CD8-positive, alpha-beta T cell (primary cell): ENCODE measurements at regions of chr3 and their contacts with region 1.

Region 1: DNA sequence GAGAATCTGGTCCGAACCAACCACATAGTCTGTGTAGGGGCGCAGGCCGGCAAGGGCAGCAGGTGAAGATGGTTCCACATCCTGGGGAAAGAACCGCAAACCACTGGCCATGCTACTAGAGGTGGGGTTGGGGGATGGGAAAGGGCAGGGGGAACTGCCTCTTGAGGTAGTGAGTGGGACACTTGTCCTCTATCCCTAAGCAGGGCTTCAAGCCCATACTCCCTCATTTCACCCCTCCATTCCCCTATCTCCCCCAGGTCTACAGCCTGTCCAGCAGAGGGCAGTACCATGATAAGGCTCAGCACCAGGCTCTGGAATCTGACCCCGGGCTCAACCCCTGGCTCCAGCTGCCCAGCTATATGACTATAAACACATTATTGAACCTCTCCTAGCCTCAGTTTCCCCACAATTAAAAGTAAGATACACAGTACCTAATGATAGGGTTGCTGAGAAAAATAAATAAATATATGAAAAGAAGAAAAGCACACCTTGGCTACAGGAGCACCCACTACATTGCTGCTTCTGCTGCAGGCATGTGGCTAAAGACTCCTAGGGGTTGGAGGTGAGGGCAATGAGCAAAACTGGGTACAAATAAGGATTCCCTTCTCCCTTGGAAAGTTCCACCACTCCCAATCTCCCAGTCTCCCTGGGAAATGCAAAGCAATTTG is 6.3 kb downstream of the GORASP1 start:
- DNase-seq: peak in 8 of 9 experiments; percentile 31 to 76 (median 58)
- ATAC-seq: peak; percentile 74
- H3K4me3 ChIP-seq: no peak overlapping the region
- H3K4me3 Mint-ChIP-seq: no peak overlapping the region
- H3K27ac ChIP-seq: no peak overlapping the region
- H3K27ac Mint-ChIP-seq: peak overlapping the region; percentile 55
- H3K4me1 ChIP-seq: peaks cover 8% of the 10 kb centered on the region
- H3K4me1 Mint-ChIP-seq: peaks cover 34% of the 10 kb centered on the region
- H3K27me3 ChIP-seq: no peaks in the 10 kb centered on the region
- H3K27me3 Mint-ChIP-seq: no peaks in the 10 kb centered on the region
- CTCF ChIP-seq: peak; percentile 66

Region 2: DNA sequence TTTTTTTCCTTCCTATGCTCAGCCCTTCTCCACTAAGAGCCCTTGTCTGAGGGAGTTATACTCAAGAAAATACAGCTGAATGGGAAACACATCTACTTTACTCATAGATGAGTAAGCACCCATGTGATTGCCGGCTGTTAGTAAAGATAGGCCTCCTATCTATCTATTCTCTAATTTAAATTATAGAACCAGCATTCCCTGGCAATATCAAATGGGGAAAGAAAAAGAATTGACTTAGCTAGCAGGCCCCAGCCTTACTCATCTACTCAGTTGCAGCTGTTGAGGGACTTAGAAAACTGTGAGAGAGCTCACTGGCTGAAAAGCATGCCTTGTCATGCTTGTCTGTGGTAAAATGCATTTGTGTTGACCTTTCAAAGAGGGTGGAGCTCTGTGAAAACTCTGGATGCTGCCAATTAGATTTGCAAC is 1809.9 kb before region 1 on chr3:
- CTCF ChIA-PET with region 1: no interaction called
- POLR2A ChIA-PET with region 1: no interaction called
- intact Hi-C with region 1: no loop called
- DNase-seq: no peak
- ATAC-seq: no peak
- H3K4me3 ChIP-seq: no peak overlapping the region
- H3K4me3 Mint-ChIP-seq: no peak overlapping the region
- H3K27ac ChIP-seq: no peak overlapping the region
- H3K27ac Mint-ChIP-seq: no peak overlapping the region
- H3K4me1 ChIP-seq: no peaks in the 10 kb centered on the region
- H3K4me1 Mint-ChIP-seq: peaks cover 11% of the 10 kb centered on the region
- H3K27me3 ChIP-seq: no peaks in the 10 kb centered on the region
- H3K27me3 Mint-ChIP-seq: no peaks in the 10 kb centered on the region
- CTCF ChIP-seq: no peak

Region 3: DNA sequence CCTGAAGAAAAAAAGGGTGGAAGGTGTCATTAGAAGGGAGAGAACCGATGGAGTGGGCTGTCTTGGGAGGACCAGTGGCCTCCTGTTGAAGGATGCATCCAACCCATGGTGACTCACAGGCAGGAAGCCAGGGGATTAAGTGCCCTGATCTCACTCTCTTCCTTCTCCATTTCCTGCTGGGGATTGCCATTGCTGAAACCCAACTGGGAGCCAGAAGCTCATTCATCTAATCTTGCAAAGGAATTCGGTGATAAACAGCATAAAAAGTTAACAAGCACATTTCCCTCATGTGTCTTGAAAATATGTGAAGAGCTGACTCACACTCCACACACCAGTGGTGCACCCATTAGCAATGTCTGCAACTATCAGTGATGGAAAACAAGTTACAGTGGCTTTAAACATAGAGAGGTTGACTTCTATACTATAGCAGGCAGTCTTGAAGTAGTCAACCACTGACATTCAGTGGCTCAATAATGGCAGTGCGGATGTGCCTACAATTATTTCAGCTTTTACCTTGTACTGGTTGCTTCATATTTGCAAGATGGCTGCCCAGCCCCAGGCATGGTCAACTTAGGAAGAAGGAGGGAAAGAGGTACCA is 65.1 kb after region 1 on chr3:
- CTCF ChIA-PET with region 1: interaction called, 3 read pairs
- POLR2A ChIA-PET with region 1: no interaction called
- intact Hi-C with region 1: loop called in 1 of 2 experiments (anchors 1 kb)
- DNase-seq: peak in 2 of 9 experiments; percentile 23 to 43
- ATAC-seq: peak; percentile 62
- H3K4me3 ChIP-seq: no peak overlapping the region
- H3K4me3 Mint-ChIP-seq: no peak overlapping the region
- H3K27ac ChIP-seq: no peak overlapping the region
- H3K27ac Mint-ChIP-seq: no peak overlapping the region
- H3K4me1 ChIP-seq: no peaks in the 10 kb centered on the region
- H3K4me1 Mint-ChIP-seq: no peaks in the 10 kb centered on the region
- H3K27me3 ChIP-seq: no peaks in the 10 kb centered on the region
- H3K27me3 Mint-ChIP-seq: no peaks in the 10 kb centered on the region
- CTCF ChIP-seq: no peak

Region 4: DNA sequence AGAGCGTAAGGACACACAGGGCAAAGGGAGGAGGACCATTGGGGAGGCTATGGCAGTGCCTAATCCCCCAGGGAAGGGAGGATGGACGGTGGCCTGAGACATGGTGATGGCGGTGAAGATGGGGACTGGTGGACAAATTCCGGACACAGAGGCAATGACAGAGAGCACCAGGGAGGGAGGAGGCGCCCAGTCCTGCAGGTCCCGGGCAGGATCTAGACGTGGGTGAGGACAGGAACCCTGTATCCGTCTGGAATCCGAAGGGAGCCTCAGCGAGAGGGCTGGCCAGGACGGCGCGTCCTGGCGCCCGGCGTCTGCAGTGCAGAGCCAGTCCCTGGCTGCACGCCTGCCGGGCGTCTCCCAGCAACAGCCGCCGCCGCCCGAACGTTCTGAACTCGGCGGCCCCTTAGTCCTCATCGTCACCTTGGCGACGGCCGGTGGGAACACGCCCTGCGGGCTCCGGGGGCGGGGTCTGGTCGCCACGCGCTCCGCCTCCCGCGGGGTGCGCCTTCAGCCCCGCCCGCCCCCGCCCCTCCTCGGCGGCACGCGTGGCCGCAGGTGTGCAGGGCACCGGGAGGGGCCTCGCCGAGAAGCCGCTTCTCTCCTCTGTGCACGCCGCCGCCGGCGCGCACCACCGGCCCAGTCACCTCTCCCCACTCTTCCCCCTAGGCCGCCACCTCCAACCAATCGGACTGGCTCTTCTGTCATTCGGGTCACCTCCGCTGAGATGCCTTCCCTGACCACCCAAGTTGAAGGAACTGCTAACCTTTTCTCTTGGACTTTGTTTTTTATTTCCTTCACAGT is 79.6 kb after region 1 on chr3:
- CTCF ChIA-PET with region 1: no interaction called
- POLR2A ChIA-PET with region 1: no interaction called
- intact Hi-C with region 1: loop called (anchors 1 to 2 kb)
- DNase-seq: peak; percentile 79 to 96 (median 88)
- ATAC-seq: peak; percentile 89
- H3K4me3 ChIP-seq: peak overlapping the region; percentile 39 to 44
- H3K4me3 Mint-ChIP-seq: peak overlapping the region; percentile 76
- H3K27ac ChIP-seq: peak overlapping the region; percentile 39 to 62
- H3K27ac Mint-ChIP-seq: peak overlapping the region; percentile 85
- H3K4me1 ChIP-seq: peaks cover 27% of the 10 kb centered on the region
- H3K4me1 Mint-ChIP-seq: peaks cover 37% of the 10 kb centered on the region
- H3K27me3 ChIP-seq: no peaks in the 10 kb centered on the region
- H3K27me3 Mint-ChIP-seq: no peaks in the 10 kb centered on the region
- CTCF ChIP-seq: no peak

Region 5: GRCh38 chr3:39378088-39378487 is 276.9 kb after region 1 on chr3:
- CTCF ChIA-PET with region 1: no interaction called
- POLR2A ChIA-PET with region 1: no interaction called
- intact Hi-C with region 1: loop called (anchors 1 to 5 kb)
- DNase-seq: peak; percentile 23 to 78 (median 63)
- ATAC-seq: peak; percentile 81
- H3K4me3 ChIP-seq: no peak overlapping the region
- H3K4me3 Mint-ChIP-seq: no peak overlapping the region
- H3K27ac ChIP-seq: no peak overlapping the region
- H3K27ac Mint-ChIP-seq: no peak overlapping the region
- H3K4me1 ChIP-seq: peaks cover 6% of the 10 kb centered on the region
- H3K4me1 Mint-ChIP-seq: peaks cover 11% of the 10 kb centered on the region
- H3K27me3 ChIP-seq: no peaks in the 10 kb centered on the region
- H3K27me3 Mint-ChIP-seq: peaks cover 6% of the 10 kb centered on the region
- CTCF ChIP-seq: peak; percentile 65